Activated CD4-positive, alpha-beta memory T cell treated with anti-CD3 and anti-CD28 coated beads for 36 hours (primary cell): ENCODE measurements at regions of chr1 and their contacts with region 1.

Region 1: DNA sequence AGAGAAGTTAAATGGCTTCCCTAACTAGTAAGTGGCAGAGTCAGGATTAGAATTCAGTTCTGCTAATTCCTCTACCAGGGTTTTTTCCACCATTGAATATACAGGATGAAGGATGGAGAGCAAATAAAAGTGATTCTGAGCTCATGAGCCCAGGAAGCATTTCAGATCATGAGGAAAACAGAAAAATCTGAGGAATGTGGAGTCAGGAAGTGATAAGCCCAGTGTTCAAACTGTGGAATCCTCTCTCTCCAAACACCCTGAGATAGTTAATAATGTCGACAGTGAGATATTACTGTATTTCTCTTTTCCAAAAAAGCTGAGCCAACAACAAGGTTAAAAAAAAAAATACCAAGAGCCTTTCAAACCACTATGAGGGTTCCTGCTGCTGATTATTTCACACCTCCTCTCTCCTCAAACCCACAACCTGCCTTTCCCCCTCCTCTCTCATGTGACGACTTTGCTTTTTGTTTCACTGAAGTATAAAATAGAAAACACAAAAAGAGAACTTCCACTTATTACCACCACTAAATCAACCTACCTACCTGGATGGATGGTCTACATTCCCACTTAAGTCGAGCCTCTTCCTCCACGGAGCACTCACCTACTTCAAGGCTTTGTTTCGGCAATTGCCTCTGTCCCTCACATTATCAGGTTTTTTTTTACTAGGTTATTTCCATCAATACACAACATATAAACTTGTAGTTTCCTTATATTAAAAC is 8.9 kb downstream of the SLAMF1 start:
- DNase-seq: peak; percentile 64
- H3K4me3 Mint-ChIP-seq: peak overlapping the region; percentile 76
- H3K27ac Mint-ChIP-seq: peak overlapping the region; percentile 92
- H3K4me1 Mint-ChIP-seq: peaks cover 86% of the 10 kb centered on the region
- H3K27me3 Mint-ChIP-seq: no peaks in the 10 kb centered on the region

Region 2: GRCh38 chr1:160584784-160585183 is 53.2 kb before region 1 on chr1:
- CTCF ChIA-PET with region 1: no interaction called
- POLR2A ChIA-PET with region 1: no interaction called
- intact Hi-C with region 1: no loop called
- DNase-seq: no peak
- H3K4me3 Mint-ChIP-seq: no peak overlapping the region
- H3K27ac Mint-ChIP-seq: peak overlapping the region; percentile 57
- H3K4me1 Mint-ChIP-seq: peaks cover 53% of the 10 kb centered on the region
- H3K27me3 Mint-ChIP-seq: no peaks in the 10 kb centered on the region

Region 3: GRCh38 chr1:160618763-160619274 is 19.2 kb before region 1 on chr1:
- CTCF ChIA-PET with region 1: interaction called, 17 read pairs
- POLR2A ChIA-PET with region 1: interaction called, 288 read pairs
- intact Hi-C with region 1: loop called (anchors 1 kb)
- DNase-seq: peak; percentile 59
- H3K4me3 Mint-ChIP-seq: no peak overlapping the region
- H3K27ac Mint-ChIP-seq: peak overlapping the region; percentile 68
- H3K4me1 Mint-ChIP-seq: peaks cover 63% of the 10 kb centered on the region
- H3K27me3 Mint-ChIP-seq: no peaks in the 10 kb centered on the region

Region 4: DNA sequence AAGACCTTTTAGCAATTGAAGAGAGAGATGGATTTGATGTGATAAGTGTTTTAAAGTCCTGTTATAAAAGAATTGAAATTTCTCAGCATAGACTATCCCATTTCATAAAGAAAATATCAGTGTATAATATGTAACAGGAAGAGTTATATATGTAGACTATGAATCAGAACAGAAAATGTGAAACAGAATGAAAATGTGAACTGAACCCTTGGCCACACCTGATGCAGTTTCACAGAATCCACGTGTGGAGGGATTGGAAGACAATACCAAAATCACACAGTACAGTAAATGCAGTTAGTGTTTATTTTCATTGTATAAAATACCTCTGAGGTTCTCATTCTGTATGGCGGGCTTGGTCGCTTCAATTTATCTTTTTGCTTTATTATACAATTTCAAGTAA is 18.8 kb after region 1 on chr1:
- CTCF ChIA-PET with region 1: interaction called, 3 read pairs
- POLR2A ChIA-PET with region 1: interaction called, 3 read pairs
- intact Hi-C with region 1: loop called (anchors 1 kb)
- DNase-seq: no peak
- H3K4me3 Mint-ChIP-seq: peak overlapping the region; percentile 5
- H3K27ac Mint-ChIP-seq: peak overlapping the region; percentile 73
- H3K4me1 Mint-ChIP-seq: peaks cover 45% of the 10 kb centered on the region
- H3K27me3 Mint-ChIP-seq: no peaks in the 10 kb centered on the region

Region 5: GRCh38 chr1:160711602-160712311 is 73.8 kb after region 1 on chr1 and contains the start of gene CD48:
- CTCF ChIA-PET with region 1: interaction called, 3 read pairs
- POLR2A ChIA-PET with region 1: interaction called, 11 read pairs
- intact Hi-C with region 1: loop called (anchors 1 kb)
- DNase-seq: peak; percentile 65
- H3K4me3 Mint-ChIP-seq: no peak within 1 kb of the TSS
- H3K27ac Mint-ChIP-seq: no peak within 1 kb of the TSS
- H3K4me1 Mint-ChIP-seq: peaks cover 17% of the 10 kb centered on the region
- H3K27me3 Mint-ChIP-seq: no peaks in the 10 kb centered on the region
- total RNA-seq, gene CD48: 190 to 194 TPM

Region 6: DNA sequence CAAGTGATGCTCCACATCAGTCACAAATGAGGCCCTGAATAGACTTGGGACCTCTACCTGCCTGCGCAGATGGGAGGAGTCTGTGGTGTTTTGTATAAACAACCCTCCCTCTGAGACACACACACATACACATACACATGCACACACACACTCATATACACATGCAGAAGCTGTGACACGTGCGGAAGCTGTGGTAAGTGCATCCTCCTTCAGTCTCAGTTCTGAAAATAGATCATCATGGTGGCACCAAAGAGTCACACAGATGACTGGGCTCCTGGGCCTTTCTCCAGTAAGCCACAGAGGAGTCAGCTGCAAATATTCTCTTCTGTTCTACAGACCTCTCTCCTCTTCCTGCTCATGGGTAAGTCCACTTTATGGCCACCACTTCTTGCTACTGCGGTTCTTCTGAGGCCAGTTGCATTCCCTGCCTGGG is 158.0 kb after region 1 on chr1 and contains the start of gene LY9:
- CTCF ChIA-PET with region 1: no interaction called
- POLR2A ChIA-PET with region 1: interaction called, 3 read pairs
- intact Hi-C with region 1: loop called (anchors 5 kb)
- DNase-seq: peak; percentile 90
- H3K4me3 Mint-ChIP-seq: peak within 1 kb of the TSS; percentile 77
- H3K27ac Mint-ChIP-seq: peak within 1 kb of the TSS; percentile 88
- H3K4me1 Mint-ChIP-seq: peaks cover 61% of the 10 kb centered on the region
- H3K27me3 Mint-ChIP-seq: no peaks in the 10 kb centered on the region
- total RNA-seq, gene LY9: 4.8 to 4.9 TPM